ENCODE measurements at regions of chr17 and their contacts with region 1.

Region 1: GRCh38 chr17:29568331-29569244 is at the start of gene TP53I13:
- H3K4me3 Mint-ChIP-seq: peak within 1 kb of the TSS; percentile 98
- H3K27ac Mint-ChIP-seq: peak within 1 kb of the TSS; percentile 95
- H3K4me1 Mint-ChIP-seq: peaks cover 62% of the 10 kb centered on the region
- H3K27me3 Mint-ChIP-seq: no peaks in the 10 kb centered on the region

Region 2: DNA sequence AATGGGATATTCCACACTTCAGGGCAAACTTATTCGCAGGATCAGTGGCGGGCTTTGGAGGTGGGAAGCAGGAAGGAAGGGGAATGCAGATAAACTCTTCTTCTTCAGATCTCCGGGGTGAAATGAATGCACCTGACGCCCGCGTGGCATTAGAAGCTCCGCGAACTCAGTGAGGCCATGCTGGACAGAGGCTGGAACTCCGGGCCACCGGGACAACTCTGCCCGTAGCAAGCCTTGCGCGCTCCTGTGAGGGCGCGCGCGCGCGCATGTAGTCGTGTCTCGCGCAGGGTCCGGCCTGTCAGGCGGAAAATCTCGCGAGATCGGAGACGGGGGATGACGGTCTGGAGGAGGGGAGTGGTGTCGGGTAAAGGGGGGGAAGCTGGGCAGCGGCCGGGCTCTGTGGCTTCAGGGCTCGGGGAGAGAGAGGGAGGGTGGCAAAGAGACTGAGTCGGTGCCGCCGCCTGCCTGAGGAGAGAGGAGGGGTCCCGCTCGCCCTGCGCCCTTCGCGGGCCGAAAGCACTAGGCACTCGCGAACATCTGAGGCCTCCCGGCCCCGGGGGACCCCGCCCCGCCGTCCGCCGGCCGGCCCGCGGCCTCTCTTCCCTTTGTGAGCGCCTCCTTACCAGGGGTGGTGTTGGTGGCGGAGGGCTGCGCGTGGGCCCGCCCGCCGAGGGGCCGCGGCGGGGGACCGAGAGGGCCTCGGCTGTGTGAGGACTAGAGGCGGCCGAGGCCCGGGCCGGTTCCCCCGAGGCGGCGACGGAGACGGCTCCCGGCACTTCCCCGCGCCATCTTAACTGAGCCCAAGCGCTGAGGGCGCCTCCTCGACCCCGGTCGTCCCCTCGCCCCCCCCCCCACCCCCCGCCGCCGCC is 178.4 kb before region 1 on chr17 and contains the start of gene TAOK1:
- intact Hi-C with region 1: loop called (anchors 10 kb)
- H3K4me3 Mint-ChIP-seq: peak within 1 kb of the TSS; percentile 96
- H3K27ac Mint-ChIP-seq: peak within 1 kb of the TSS; percentile 90
- H3K4me1 Mint-ChIP-seq: peaks cover 33% of the 10 kb centered on the region
- H3K27me3 Mint-ChIP-seq: no peaks in the 10 kb centered on the region

Region 3: DNA sequence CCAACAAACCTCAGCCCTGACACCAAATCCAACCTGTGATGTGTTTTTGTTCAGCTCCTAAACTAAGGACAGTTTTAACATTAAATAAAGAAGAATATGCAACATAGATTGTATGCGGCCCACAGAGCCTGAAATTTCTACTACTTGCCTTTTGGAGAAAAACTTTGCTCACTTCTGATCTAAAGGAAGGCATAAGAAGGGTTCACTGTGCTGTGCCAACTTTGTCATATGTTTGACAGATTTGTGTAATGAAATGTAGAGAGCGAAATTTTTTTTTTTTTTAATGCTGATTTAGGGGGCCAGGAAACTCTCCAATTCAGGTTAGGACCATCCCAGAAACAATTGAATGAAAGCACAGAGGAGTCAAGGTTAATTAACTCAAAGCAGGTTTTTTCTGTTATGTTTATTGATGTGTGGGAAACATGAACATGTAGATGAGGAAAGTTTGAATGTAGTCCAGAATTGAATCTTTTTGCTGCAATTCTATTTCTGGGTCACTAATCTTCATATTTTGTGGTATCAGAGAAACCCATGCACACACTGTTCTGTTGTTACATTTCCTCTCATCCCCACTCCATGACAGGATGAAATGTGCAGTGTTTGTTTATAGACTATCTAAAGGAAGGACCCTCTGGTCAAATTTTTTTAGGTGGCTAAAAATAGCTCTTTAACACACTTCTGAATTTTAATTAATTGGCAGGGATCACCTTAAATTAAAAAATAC is 106.9 kb before region 1 on chr17:
- intact Hi-C with region 1: no loop called
- H3K4me3 Mint-ChIP-seq: no peak overlapping the region
- H3K27ac Mint-ChIP-seq: no peak overlapping the region
- H3K4me1 Mint-ChIP-seq: peaks cover 23% of the 10 kb centered on the region
- H3K27me3 Mint-ChIP-seq: no peaks in the 10 kb centered on the region

Region 4: GRCh38 chr17:29617125-29617480 is 48.5 kb after region 1 on chr17:
- intact Hi-C with region 1: loop called (anchors 10 kb)
- H3K4me3 Mint-ChIP-seq: peak overlapping the region; percentile 59
- H3K27ac Mint-ChIP-seq: peak overlapping the region; percentile 78
- H3K4me1 Mint-ChIP-seq: peaks cover 55% of the 10 kb centered on the region
- H3K27me3 Mint-ChIP-seq: peaks cover 86% of the 10 kb centered on the region

Region 5: GRCh38 chr17:29664743-29665480 is 96.3 kb after region 1 on chr17:
- intact Hi-C with region 1: no loop called
- H3K4me3 Mint-ChIP-seq: no peak overlapping the region
- H3K27ac Mint-ChIP-seq: peak overlapping the region; percentile 78
- H3K4me1 Mint-ChIP-seq: peaks cover 28% of the 10 kb centered on the region
- H3K27me3 Mint-ChIP-seq: no peaks in the 10 kb centered on the region

Region 6: GRCh38 chr17:29682054-29682453 is 113.5 kb after region 1 on chr17:
- intact Hi-C with region 1: no loop called
- H3K4me3 Mint-ChIP-seq: peak overlapping the region; percentile 30
- H3K27ac Mint-ChIP-seq: peak overlapping the region; percentile 77
- H3K4me1 Mint-ChIP-seq: peaks cover 37% of the 10 kb centered on the region
- H3K27me3 Mint-ChIP-seq: no peaks in the 10 kb centered on the region